ENCODE measurements at regions of chr3 and their contacts with region 1.

Region 1: DNA sequence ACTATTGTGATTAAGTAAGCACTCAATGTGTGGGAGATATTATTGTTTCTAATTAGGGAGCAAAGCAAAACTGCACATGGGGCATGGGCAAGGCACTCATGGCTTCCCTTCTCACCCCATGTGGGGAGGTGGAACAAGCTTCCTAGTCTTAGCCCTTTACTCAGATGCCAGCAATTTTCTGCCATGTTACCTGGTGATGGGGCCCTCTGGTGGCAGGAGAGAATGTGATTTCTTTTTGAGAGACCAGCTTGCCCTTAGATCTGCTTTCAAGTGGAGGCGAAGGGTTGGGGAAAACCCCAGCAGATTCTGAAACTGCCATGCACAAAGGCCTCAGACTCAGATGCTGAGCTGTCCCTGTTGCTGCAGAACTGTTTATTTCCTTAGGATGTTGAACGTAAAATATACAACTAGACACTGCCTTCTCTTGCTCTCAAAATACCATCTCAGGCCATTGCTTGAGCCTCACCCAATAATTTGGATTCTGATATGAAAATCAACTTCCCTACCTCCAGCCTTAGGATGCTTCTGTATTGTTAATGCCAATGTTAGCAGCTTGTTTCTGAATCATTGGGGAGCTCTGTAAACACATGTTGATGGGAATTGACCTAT is 130.2 kb upstream of the TPRG1 start:
- DNase-seq: peak; percentile 86
- H3K4me3 Mint-ChIP-seq: no peak overlapping the region
- H3K27ac Mint-ChIP-seq: peak overlapping the region; percentile 23
- H3K4me1 Mint-ChIP-seq: peaks cover 37% of the 10 kb centered on the region
- H3K27me3 Mint-ChIP-seq: no peaks in the 10 kb centered on the region

Region 2: DNA sequence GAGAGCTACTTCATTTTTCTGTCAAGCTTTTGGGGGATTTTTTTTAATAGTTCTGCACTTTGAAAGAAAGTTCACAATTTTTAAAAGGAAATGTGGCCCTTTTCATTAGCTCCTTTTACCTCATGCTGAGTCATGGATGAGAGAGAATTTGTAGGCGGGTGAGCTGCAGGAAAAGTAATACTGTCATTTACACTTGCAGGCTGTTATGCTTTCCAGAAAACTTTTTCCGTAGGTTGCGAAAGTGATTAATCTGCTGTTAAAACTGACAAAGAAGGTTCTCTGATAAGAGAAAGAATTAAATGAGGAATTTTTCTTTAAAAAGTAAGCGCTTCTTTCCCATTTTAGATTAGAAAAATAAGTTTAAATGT is 457.4 kb before region 1 on chr3:
- CTCF ChIA-PET with region 1: interaction called, 3 read pairs
- POLR2A ChIA-PET with region 1: no interaction called
- intact Hi-C with region 1: loop called (anchors 10 kb)
- DNase-seq: peak; percentile 31
- H3K4me3 Mint-ChIP-seq: no peak overlapping the region
- H3K27ac Mint-ChIP-seq: no peak overlapping the region
- H3K4me1 Mint-ChIP-seq: peaks cover 13% of the 10 kb centered on the region
- H3K27me3 Mint-ChIP-seq: no peaks in the 10 kb centered on the region

Region 3: DNA sequence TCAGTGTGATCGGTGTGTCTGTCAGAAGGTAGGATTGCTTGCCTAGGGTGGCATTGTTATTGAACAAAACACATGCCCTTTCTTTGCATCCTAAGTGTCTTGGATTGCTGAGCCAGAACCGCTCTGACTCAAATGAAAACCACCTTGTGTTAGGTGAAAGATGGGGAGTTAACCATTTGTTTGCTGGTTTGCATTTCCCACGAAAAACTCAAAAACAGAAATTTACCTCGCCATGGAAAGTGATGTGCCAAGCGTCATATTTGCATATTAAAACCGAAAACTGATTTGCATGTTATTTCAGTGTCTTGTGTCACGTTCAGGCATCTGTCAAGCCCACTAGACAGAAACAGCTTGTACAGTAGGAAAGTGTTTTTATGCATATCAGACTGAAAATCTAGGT is 344.5 kb before region 1 on chr3:
- CTCF ChIA-PET with region 1: no interaction called
- POLR2A ChIA-PET with region 1: no interaction called
- intact Hi-C with region 1: loop called (anchors 1 kb)
- DNase-seq: peak; percentile 55
- H3K4me3 Mint-ChIP-seq: no peak overlapping the region
- H3K27ac Mint-ChIP-seq: peak overlapping the region; percentile 7
- H3K4me1 Mint-ChIP-seq: peaks cover 50% of the 10 kb centered on the region
- H3K27me3 Mint-ChIP-seq: peaks cover 7% of the 10 kb centered on the region

Region 4: DNA sequence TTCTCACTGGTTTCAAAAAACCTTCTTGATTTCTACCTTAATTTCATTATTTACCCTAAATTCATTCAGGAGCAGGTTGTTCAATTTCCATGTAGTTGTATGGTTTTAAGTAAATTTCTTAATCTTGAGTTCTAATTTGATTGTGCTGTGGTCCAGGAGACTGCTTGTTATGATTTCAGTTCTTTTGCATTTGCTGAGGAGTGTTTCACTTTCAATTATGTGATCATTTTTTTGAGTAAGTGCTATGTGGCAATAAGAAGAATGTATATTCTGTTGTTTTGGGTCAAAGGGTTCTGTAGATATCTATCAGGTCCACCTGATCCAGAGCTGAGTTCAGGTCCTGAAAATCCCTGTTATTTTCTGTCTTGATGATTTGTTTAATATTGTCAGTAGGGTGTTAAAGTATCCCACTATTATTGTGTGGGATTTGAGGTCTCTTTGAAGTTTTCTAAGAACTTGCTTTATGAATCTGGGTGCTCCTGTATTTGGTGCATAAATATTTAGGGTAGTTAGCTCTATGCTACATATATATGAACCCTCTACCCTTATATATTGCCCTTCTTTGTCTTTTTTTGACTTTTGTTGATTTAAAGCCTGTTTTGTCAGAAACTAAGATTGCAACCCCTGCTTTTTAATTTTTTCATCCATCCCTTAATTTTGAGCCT is 28.2 kb before region 1 on chr3:
- CTCF ChIA-PET with region 1: interaction called, 14 read pairs
- POLR2A ChIA-PET with region 1: no interaction called
- intact Hi-C with region 1: loop called (anchors 1 kb)
- DNase-seq: no peak
- H3K4me3 Mint-ChIP-seq: no peak overlapping the region
- H3K27ac Mint-ChIP-seq: no peak overlapping the region
- H3K4me1 Mint-ChIP-seq: peaks cover 20% of the 10 kb centered on the region
- H3K27me3 Mint-ChIP-seq: peaks cover 11% of the 10 kb centered on the region

Region 5: GRCh38 chr3:189071441-189071840 is 29.9 kb after region 1 on chr3:
- CTCF ChIA-PET with region 1: interaction called, 13 read pairs
- POLR2A ChIA-PET with region 1: no interaction called
- intact Hi-C with region 1: no loop called
- DNase-seq: no peak
- H3K4me3 Mint-ChIP-seq: no peak overlapping the region
- H3K27ac Mint-ChIP-seq: no peak overlapping the region
- H3K4me1 Mint-ChIP-seq: peaks cover 8% of the 10 kb centered on the region
- H3K27me3 Mint-ChIP-seq: no peaks in the 10 kb centered on the region

Region 6: DNA sequence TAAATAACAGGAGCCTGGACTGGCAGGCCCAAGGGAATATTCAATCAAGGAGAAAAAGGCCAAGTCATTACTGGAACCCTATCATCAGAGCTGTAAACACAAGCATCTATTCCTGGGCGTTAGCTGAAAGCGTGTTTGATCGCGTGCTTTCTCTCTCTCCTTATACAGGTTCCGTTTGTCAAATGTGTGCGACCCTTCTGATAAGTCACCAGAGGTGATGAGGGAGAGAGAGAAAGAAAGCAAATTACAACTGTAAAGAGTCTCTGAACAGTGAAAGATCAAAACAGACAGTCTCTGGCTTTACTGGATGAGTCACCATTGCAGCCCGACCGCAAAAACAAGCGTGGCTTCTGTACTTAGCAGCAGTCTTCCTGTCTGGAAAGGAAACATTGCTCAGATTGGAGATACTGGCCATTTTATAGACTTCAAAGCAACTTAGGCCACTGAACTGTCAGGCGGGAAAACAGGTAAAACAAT is 90.7 kb after region 1 on chr3:
- CTCF ChIA-PET with region 1: interaction called, 11 read pairs
- POLR2A ChIA-PET with region 1: no interaction called
- intact Hi-C with region 1: loop called (anchors 1 kb)
- DNase-seq: peak; percentile 90
- H3K4me3 Mint-ChIP-seq: peak overlapping the region; percentile 50
- H3K27ac Mint-ChIP-seq: peak overlapping the region; percentile 83
- H3K4me1 Mint-ChIP-seq: peaks cover 26% of the 10 kb centered on the region
- H3K27me3 Mint-ChIP-seq: no peaks in the 10 kb centered on the region

Region 7: DNA sequence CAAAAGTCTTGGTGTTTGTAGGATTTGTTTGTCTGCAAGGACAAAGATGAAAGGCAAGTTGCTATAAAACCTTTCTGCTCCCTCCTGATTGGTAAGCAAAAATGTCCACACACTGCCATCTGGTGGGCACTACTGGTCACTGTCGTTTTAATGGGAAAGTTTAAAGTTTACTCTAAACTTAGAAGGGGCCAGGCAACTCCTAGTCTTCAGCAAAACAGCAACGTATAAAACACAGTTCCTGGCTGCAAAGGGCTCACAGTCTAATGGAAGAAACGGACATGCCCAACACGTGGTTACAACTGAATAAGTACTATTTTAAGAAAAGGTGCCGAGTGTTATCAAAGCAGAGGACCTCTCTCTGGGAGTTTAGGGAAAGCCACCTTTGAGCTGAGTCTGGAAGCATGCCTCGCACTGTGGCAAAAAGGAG is 106.5 kb after region 1 on chr3:
- CTCF ChIA-PET with region 1: interaction called, 15 read pairs
- POLR2A ChIA-PET with region 1: no interaction called
- intact Hi-C with region 1: loop called (anchors 1 kb)
- DNase-seq: peak; percentile 77
- H3K4me3 Mint-ChIP-seq: no peak overlapping the region
- H3K27ac Mint-ChIP-seq: no peak overlapping the region
- H3K4me1 Mint-ChIP-seq: peaks cover 19% of the 10 kb centered on the region
- H3K27me3 Mint-ChIP-seq: no peaks in the 10 kb centered on the region

Region 8: DNA sequence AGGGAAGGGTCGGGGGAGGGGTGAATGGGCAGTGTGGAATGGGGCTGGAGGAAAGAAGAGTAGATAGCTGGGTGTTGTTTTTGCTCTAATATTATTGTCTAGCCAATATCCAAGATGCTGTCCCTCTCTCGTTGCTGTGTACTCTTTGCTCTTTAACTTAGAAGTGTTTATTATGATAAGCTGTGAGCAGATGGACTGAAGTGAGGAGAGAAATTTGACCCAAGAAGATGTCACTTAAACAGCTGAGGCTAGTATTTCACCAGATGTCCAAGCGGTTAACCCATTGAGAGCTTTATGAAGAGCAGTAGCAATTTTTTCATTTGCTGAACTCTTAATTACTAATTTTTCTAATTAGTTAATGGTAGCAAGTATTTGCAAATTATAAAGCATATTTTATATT is 377.5 kb after region 1 on chr3:
- CTCF ChIA-PET with region 1: no interaction called
- POLR2A ChIA-PET with region 1: no interaction called
- intact Hi-C with region 1: no loop called
- DNase-seq: no peak
- H3K4me3 Mint-ChIP-seq: no peak overlapping the region
- H3K27ac Mint-ChIP-seq: no peak overlapping the region
- H3K4me1 Mint-ChIP-seq: peaks cover 3% of the 10 kb centered on the region
- H3K27me3 Mint-ChIP-seq: peaks cover 2% of the 10 kb centered on the region

Region 9: DNA sequence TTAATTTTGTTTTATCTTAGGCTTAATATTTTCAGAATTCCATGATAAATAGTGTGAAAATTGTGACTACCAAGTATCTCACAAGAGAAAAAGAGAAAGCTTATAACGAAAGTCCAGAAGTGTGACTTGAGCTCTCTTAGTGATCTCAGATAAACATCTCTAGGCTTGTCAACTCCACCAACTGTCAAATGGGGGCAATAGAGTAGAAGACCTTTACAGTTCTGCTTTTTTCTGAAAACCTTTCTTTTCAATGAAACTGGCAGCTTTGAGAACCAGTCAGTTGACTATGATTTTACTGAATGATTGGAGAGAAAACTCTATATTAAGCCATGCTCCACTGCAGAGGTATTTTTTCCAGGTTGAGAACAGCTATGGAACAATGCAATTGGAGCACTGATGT is 470.5 kb after region 1 on chr3:
- CTCF ChIA-PET with region 1: no interaction called
- POLR2A ChIA-PET with region 1: no interaction called
- intact Hi-C with region 1: no loop called
- DNase-seq: no peak
- H3K4me3 Mint-ChIP-seq: no peak overlapping the region
- H3K27ac Mint-ChIP-seq: no peak overlapping the region
- H3K4me1 Mint-ChIP-seq: peaks cover 4% of the 10 kb centered on the region
- H3K27me3 Mint-ChIP-seq: peaks cover 2% of the 10 kb centered on the region

Region 10: DNA sequence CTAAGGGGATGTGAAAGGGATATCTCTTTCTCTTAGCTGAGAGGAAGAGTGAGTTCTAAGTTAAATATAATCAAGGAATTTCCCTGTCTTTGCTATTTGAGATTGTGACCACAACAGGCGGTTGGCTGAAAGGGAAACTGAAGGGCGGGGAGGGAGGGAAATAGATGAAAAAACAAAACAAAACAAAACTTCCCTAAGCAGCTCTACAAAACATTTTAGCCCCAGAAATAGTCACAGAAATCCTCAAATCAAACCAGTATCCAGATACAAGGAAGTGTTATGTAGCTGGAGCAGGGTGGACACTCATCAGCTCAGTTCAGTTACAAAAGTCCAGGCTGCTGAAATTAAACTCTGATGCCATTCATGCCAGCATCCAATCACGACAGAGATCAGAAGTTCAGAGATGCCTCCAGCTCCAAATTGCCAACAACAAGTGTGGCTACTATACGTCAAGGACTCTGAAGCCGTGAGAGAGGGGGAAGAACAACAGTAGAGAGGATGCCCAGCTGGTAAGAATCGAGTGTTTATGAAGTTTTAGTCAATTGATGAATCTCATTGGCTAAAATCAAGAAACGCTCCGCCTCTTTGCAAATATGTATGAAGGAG is 589.3 kb after region 1 on chr3:
- CTCF ChIA-PET with region 1: no interaction called
- POLR2A ChIA-PET with region 1: no interaction called
- intact Hi-C with region 1: no loop called
- DNase-seq: peak; percentile 18
- H3K4me3 Mint-ChIP-seq: peak overlapping the region; percentile 10
- H3K27ac Mint-ChIP-seq: no peak overlapping the region
- H3K4me1 Mint-ChIP-seq: peaks cover 21% of the 10 kb centered on the region
- H3K27me3 Mint-ChIP-seq: no peaks in the 10 kb centered on the region